Activated CD4-positive, alpha-beta memory T cell treated with anti-CD3 and anti-CD28 coated beads for 36 hours (primary cell): ENCODE measurements at regions of chr2 and their contacts with region 1.

Region 1: GRCh38 chr2:64330281-64331113 is 123.5 kb upstream of the LGALSL start:
- DNase-seq: peak; percentile 82
- H3K4me3 Mint-ChIP-seq: peak overlapping the region; percentile 54
- H3K27ac Mint-ChIP-seq: peak overlapping the region; percentile 46
- H3K4me1 Mint-ChIP-seq: peaks cover 41% of the 10 kb centered on the region
- H3K27me3 Mint-ChIP-seq: no peaks in the 10 kb centered on the region

Region 2: DNA sequence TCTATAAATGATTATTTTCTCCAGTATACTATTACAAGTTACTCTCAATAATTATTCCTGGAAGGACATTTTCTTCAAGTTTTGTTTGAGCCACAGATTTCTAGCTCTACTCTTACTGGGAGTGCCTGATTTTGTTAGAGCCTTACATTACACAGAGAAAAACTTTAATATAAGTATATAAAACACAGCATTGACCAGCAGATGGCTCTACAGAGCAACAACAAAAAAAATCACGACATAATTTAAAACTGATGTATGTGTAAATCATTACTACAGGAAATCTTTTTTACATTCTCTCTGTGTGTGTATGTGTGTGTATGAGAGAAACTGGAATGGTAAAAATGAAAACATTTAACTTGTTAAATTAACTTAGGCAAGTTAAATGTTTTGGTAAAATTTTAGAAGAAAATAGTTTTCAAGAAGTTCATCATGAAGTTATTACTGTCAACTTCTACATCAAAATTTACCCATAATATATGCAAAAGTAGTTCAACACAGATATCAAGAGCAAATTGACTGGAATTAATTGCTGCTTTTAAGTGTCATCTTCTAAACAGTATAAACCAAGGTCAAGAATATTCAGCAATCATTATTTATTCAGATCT is 638.4 kb before region 1 on chr2:
- CTCF ChIA-PET with region 1: interaction called, 6 read pairs
- POLR2A ChIA-PET with region 1: no interaction called
- intact Hi-C with region 1: loop called (anchors 5 kb)
- DNase-seq: no peak
- H3K4me3 Mint-ChIP-seq: no peak overlapping the region
- H3K27ac Mint-ChIP-seq: no peak overlapping the region
- H3K4me1 Mint-ChIP-seq: no peaks in the 10 kb centered on the region
- H3K27me3 Mint-ChIP-seq: no peaks in the 10 kb centered on the region

Region 3: GRCh38 chr2:64101141-64101591 is 229.3 kb before region 1 on chr2:
- CTCF ChIA-PET with region 1: interaction called, 14 read pairs
- POLR2A ChIA-PET with region 1: interaction called, 20 read pairs
- intact Hi-C with region 1: loop called (anchors 1 kb)
- DNase-seq: no peak
- H3K4me3 Mint-ChIP-seq: peak overlapping the region; percentile 49
- H3K27ac Mint-ChIP-seq: peak overlapping the region; percentile 78
- H3K4me1 Mint-ChIP-seq: peaks cover 63% of the 10 kb centered on the region
- H3K27me3 Mint-ChIP-seq: no peaks in the 10 kb centered on the region

Region 4: DNA sequence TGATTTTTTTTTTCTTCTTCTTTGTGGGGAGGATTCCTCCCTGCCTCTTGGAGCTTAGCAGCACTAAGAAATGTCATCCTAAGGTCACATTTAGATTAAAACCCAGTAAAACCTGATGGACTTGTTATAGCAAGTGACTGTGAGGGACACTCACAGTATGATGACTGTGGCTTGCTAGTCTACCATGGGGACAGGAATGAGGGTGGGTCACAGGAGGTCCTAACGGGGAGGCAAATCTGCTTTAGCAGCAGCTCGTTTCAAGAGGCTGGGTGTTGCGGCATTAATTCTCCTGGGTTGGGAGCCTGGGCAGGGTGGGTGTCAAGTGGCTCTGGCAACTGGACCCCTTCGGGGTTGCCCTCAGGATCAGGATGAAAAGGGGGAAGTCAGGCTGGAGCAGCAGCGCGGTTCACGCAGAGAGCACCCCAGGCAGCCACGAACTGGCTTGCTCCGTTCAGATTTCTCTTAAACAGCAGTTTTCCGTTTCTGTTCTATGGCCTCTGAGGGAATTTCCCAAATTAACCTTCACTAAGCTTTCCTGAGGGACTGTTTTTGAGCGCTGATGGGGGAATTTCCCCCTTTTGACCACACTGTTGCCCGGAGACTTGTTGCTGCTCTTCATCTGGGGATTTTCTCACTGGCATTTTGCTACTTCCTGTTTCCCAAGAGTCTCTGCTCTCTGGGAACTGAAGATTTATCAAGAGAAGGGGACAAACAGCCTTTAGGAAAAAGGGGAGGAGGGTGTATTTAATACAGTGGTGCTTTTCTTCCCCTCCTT is 126.5 kb before region 1 on chr2:
- CTCF ChIA-PET with region 1: interaction called, 10 read pairs
- POLR2A ChIA-PET with region 1: interaction called, 31 read pairs
- intact Hi-C with region 1: loop called (anchors 2 kb)
- DNase-seq: peak; percentile 69
- H3K4me3 Mint-ChIP-seq: peak overlapping the region; percentile 71
- H3K27ac Mint-ChIP-seq: peak overlapping the region; percentile 87
- H3K4me1 Mint-ChIP-seq: peaks cover 83% of the 10 kb centered on the region
- H3K27me3 Mint-ChIP-seq: no peaks in the 10 kb centered on the region

Region 5: DNA sequence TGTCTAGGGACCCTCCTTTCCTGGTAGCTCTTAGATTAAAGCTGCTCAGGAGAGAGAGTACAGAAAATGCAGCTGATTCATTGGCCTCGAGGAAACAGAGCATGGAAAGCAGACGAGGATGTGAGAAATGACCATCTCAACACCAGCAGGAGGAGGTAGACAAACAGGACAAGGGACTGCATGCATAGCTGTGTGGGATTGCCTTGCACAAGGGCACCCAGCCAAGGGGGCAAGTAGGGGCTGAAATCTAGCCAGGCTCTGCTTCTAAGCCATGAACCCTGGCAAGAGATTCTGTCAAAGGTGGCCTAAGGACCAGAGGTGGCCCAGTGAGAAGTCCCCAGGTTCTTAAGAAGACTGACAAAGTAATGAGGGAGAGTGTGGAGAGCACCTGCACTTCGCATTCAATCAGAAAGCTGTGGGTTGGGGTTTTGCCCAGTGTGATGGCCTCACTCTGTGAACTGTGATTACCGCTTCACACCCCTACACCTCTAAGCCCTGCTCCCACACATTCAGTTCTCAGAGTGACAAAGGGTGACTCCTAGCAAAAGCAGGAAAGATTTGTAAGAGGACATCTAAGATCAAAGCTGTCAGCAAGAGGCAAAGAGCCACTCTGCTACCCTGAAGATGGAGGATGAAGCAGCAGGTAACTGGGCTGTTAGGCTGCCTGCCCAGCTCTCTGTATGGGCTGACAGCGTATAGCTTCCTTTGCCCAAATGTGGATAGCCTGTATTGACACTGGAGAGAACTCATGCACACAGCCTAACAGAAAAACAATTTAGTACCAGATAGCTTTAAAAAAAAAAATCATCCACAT is 35.0 kb before region 1 on chr2:
- CTCF ChIA-PET with region 1: interaction called, 68 read pairs
- POLR2A ChIA-PET with region 1: interaction called, 25 read pairs
- intact Hi-C with region 1: loop called (anchors 1 kb)
- DNase-seq: peak; percentile 84
- H3K4me3 Mint-ChIP-seq: no peak overlapping the region
- H3K27ac Mint-ChIP-seq: peak overlapping the region; percentile 26
- H3K4me1 Mint-ChIP-seq: peaks cover 30% of the 10 kb centered on the region
- H3K27me3 Mint-ChIP-seq: peaks cover 2% of the 10 kb centered on the region

Region 6: DNA sequence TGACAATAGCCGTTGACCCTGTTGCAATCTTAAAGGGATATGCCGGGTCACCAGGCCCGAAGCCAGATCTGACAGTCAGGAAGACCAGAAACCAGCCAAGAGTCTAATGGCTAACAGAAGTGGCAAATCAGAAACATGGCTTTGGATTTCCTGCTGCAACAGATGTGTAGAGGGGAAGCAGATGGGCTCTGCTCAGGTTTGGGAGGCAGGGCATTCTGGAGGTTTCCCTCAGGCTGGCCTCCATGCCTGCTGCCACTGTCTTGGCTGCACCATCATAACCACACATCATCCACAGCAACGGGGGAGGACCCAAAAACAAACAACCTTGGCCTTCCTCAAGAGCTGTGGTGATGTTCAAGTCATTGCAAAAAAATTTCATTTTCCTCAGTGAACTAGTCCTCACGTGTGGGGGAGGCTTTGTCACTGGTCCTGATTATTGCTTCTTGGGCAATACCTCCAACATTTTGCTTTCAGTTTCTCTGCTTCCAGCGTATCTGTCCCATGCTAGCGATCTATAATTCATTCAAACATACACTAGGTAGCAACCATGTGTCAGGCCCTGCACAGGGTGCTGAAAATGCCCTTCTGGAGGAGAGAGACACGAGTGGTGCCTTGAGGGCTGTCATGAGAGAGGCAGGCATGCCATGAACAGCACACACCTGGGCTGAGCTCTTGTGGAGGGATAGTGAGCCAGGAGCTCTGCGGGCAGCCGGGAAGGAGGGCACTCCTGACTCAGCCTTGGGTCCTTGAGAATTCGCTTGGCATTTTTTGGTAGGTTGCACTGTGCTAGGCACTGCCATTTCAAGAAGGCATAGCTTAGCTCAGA is 75.3 kb after region 1 on chr2:
- CTCF ChIA-PET with region 1: no interaction called
- POLR2A ChIA-PET with region 1: no interaction called
- intact Hi-C with region 1: no loop called
- DNase-seq: no peak
- H3K4me3 Mint-ChIP-seq: no peak overlapping the region
- H3K27ac Mint-ChIP-seq: no peak overlapping the region
- H3K4me1 Mint-ChIP-seq: no peaks in the 10 kb centered on the region
- H3K27me3 Mint-ChIP-seq: peaks cover 2% of the 10 kb centered on the region

Region 7: DNA sequence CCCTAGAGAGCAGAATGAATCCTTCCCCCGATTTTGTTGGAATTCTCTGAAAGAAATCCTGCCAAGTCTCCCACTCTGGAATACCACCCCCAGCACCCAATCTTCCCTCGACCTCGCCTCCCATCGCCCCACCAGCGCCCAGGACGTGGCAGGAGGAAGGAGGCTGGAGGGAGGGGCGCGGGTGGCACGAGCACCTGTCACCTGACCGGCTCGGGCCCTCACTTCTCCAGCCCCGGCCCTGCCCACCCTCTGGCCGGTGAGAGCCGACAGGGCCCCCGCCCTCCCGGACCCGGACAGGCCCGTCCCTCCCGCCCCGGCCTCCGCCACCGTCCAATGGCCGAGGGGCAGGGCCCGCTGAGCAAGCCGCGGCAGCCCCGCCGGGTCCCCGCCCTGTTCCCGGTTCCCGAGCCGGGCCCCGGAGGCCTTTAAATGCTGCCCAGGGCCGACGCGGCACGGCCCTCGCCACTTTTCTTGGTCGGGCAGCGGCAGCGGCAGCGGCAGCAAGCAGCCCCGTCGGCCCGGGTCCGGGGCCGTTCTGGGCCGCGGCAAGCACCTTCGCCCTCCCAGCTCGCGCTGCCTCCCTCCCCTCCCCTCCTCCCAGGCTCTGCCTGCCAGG is 123.4 kb after region 1 on chr2 and contains the start of gene LGALSL:
- CTCF ChIA-PET with region 1: interaction called, 6 read pairs
- POLR2A ChIA-PET with region 1: no interaction called
- intact Hi-C with region 1: loop called (anchors 10 kb)
- DNase-seq: peak; percentile 40
- H3K4me3 Mint-ChIP-seq: peak within 1 kb of the TSS; percentile 74
- H3K27ac Mint-ChIP-seq: no peak within 1 kb of the TSS
- H3K4me1 Mint-ChIP-seq: peaks cover 3% of the 10 kb centered on the region
- H3K27me3 Mint-ChIP-seq: peaks cover 13% of the 10 kb centered on the region
- total RNA-seq, gene LGALSL: 1.3 to 1.5 TPM

Region 8: GRCh38 chr2:64609227-64609941 is 278.9 kb after region 1 on chr2:
- CTCF ChIA-PET with region 1: interaction called, 8 read pairs
- POLR2A ChIA-PET with region 1: no interaction called
- intact Hi-C with region 1: loop called (anchors 5 kb)
- DNase-seq: peak; percentile 75
- H3K4me3 Mint-ChIP-seq: peak overlapping the region; percentile 57
- H3K27ac Mint-ChIP-seq: no peak overlapping the region
- H3K4me1 Mint-ChIP-seq: peaks cover 26% of the 10 kb centered on the region
- H3K27me3 Mint-ChIP-seq: no peaks in the 10 kb centered on the region